ENCODE measurements at regions of chr1 and their contacts with region 1.

Region 1: GRCh38 chr1:201153474-201154388 is 543 bp downstream of the TMEM9 start:
- DNase-seq: peak; percentile 86
- CTCF ChIP-seq: no peak

Region 2: DNA sequence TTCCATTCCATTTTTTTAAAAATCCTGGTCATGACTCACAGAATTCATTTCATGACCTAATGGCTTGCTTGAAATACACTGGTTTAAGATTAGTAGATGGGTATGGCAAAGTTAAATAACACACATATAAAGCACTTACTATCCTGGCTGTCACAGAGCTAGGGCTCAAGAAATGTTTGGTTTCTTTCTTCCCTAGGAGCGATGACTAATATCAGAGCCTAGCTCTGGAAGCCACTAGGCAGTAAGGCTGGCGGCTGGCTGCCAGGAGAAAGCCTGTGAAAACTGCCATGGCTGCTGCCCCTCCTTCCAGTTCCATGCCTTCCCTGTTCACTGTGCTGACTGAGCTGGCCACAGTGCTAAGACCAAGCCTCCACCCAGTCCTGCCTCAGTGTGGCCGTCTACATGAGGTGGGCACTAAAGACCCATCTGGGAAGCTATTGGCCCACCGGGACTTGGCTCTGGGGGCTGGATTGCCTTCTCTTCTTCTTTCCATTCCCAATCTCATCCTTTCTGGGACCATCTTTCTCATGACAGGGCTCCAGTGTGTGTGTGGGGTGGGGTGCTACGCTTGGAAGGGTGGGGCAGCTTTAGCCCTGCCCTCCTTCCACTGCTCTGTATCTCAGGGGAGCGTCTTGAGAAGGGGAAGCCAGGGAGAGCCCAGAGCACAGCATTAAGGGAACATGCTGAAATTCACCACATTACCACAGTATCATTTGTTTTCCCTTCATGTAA is 16.0 kb before region 1 on chr1:
- CTCF ChIA-PET with region 1: interaction called, 31 read pairs
- POLR2A ChIA-PET with region 1: interaction called, 3 read pairs
- DNase-seq: no peak
- CTCF ChIP-seq: no peak

Region 3: GRCh38 chr1:201170533-201171062 is 16.9 kb after region 1 on chr1:
- CTCF ChIA-PET with region 1: interaction called, 31 read pairs
- POLR2A ChIA-PET with region 1: interaction called, 4 read pairs
- DNase-seq: peak; percentile 95
- CTCF ChIP-seq: no peak

Region 4: GRCh38 chr1:201559679-201560162 is 406.0 kb after region 1 on chr1:
- CTCF ChIA-PET with region 1: no interaction called
- POLR2A ChIA-PET with region 1: no interaction called
- DNase-seq: peak; percentile 86
- CTCF ChIP-seq: peak; percentile 91